Natural killer cell (primary cell): ENCODE measurements at regions of chr5 and their contacts with region 1.

Region 1: GRCh38 chr5:43389679-43390329 is 22.4 kb downstream of the CCL28 start:
- DNase-seq: peak; percentile 20 to 78
- ATAC-seq: peak; percentile 80 to 88 (median 83)
- H3K4me3 ChIP-seq: no peak overlapping the region
- H3K4me3 Mint-ChIP-seq: no peak overlapping the region
- H3K27ac ChIP-seq: no peak overlapping the region
- H3K27ac Mint-ChIP-seq: peak overlapping the region in 1 of 2 donors; percentile 59
- H3K4me1 ChIP-seq: no peaks in the 10 kb centered on the region
- H3K4me1 Mint-ChIP-seq: peaks cover 9 to 15% of the 10 kb centered on the region in 2 donors
- H3K27me3 ChIP-seq: no peaks in the 10 kb centered on the region
- H3K27me3 Mint-ChIP-seq: no peaks in the 10 kb centered on the region
- CTCF ChIP-seq: peak; percentile 85

Region 2: DNA sequence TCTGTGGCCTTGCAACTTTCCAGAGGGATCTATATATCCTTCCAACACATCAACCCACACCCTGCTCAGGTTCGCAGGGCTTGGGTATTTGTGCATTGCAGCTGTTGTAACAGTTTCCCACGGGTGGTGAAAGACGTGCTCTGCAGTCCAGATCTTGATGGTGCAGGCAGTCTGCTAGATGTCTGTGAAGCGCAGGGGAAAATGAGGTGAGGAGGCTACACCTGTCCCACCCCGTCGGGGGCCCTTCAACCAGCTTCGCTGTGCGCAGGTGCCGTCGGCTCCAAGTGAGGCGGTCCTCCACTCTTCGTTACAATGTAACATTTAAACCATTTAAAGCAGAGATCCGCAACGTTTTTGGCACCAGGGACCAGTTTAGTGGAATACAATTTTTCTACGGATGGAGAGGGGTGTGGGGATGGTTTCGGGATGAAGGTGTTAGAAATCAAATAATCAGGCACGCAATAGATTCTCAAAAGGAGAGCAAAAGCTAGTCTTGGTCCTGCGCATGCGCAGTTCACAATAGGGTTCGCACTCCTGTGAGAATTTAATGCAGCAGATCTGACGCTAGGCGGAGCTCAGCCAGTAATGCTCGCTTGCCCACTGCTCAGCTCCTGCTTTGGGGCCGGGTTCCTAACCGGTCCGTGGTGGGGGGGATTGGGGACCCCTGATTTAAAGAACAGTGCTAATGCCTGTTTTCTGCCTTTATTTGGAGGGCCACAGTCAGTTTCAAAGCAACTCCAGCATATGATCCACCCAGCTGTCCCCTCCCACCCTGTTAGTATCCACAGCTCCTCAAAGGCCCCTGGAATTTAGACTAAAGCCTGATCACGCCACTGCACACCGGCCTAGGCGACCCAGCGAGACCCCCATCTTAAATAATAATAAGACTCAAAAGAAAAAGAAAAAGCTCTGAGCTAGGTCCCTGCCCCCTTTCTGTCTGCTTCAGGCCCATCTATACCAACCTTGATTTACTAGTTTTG is 481.0 kb before region 1 on chr5:
- intact Hi-C with region 1: loop called (anchors 5 kb)
- DNase-seq: peak; percentile 83 to 98
- ATAC-seq: peak; percentile 84 to 95 (median 93)
- H3K4me3 ChIP-seq: peak overlapping the region; percentile 67
- H3K4me3 Mint-ChIP-seq: peak overlapping the region; percentile 96
- H3K27ac ChIP-seq: peak overlapping the region; percentile 41
- H3K27ac Mint-ChIP-seq: peak overlapping the region; percentile 86 to 90
- H3K4me1 ChIP-seq: peaks cover 8% of the 10 kb centered on the region
- H3K4me1 Mint-ChIP-seq: peaks cover 8 to 14% of the 10 kb centered on the region in 2 donors
- H3K27me3 ChIP-seq: no peaks in the 10 kb centered on the region
- H3K27me3 Mint-ChIP-seq: peaks cover 15 to 26% of the 10 kb centered on the region in 2 donors
- CTCF ChIP-seq: peak; percentile 81

Region 3: GRCh38 chr5:43231977-43232376 is 157.8 kb before region 1 on chr5:
- intact Hi-C with region 1: loop called (anchors 5 kb)
- DNase-seq: peak in 1 of 2 donors; percentile 14
- ATAC-seq: peak in 1 of 3 donors; percentile 53
- H3K4me3 ChIP-seq: no peak overlapping the region
- H3K4me3 Mint-ChIP-seq: no peak overlapping the region
- H3K27ac ChIP-seq: no peak overlapping the region
- H3K27ac Mint-ChIP-seq: no peak overlapping the region
- H3K4me1 ChIP-seq: no peaks in the 10 kb centered on the region
- H3K4me1 Mint-ChIP-seq: no peaks in the 10 kb centered on the region
- H3K27me3 ChIP-seq: no peaks in the 10 kb centered on the region
- H3K27me3 Mint-ChIP-seq: peaks cover 0 to 3% of the 10 kb centered on the region in 2 donors
- CTCF ChIP-seq: peak; percentile 22

Region 4: DNA sequence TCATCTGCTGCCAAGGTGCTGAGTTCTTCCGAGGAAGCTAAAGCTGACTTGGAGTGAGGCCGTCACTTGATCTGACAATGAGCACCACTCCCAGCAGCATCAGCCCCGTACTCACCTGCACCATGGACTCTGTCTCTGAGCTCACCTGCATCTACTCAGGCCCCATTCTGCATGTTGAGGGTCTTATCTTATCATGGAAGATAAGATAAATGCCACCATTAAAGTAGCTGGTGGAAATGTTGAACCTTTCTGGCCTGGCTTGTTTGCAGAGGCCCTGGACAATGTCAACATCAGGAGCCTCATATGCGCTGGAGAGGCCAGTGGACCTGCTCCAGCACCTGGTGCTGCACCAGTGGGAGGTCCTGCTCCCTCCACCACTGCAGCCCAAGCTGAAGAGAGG is 41.6 kb before region 1 on chr5:
- intact Hi-C with region 1: no loop called
- DNase-seq: no peak
- ATAC-seq: no peak
- H3K4me3 ChIP-seq: no peak overlapping the region
- H3K4me3 Mint-ChIP-seq: no peak overlapping the region
- H3K27ac ChIP-seq: no peak overlapping the region
- H3K27ac Mint-ChIP-seq: no peak overlapping the region
- H3K4me1 ChIP-seq: no peaks in the 10 kb centered on the region
- H3K4me1 Mint-ChIP-seq: no peaks in the 10 kb centered on the region
- H3K27me3 ChIP-seq: no peaks in the 10 kb centered on the region
- H3K27me3 Mint-ChIP-seq: peaks cover 9 to 23% of the 10 kb centered on the region in 2 donors
- CTCF ChIP-seq: no peak

Region 5: DNA sequence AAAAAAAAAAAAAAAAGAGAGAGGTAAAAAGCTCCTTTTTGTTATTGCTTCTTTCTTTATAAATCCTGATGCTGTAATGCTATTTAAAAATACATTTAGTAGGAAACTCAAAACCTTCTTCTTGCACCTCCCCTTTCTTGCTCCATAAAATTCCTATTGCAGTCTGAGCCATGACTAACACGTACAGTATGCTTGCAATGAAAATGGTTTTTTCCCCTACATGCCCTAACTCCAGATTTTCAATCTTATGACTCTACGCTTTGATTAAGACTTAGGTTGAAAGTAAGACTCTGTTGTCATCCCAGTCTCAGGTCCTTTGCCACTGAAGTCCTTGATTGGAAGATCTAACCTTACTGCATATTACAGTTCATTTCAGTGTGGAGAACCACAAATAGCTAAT is 975.5 kb after region 1 on chr5:
- intact Hi-C with region 1: no loop called
- DNase-seq: no peak
- ATAC-seq: no peak
- H3K4me3 ChIP-seq: no peak overlapping the region
- H3K4me3 Mint-ChIP-seq: no peak overlapping the region
- H3K27ac ChIP-seq: no peak overlapping the region
- H3K27ac Mint-ChIP-seq: no peak overlapping the region
- H3K4me1 ChIP-seq: no peaks in the 10 kb centered on the region
- H3K4me1 Mint-ChIP-seq: no peaks in the 10 kb centered on the region
- H3K27me3 ChIP-seq: no peaks in the 10 kb centered on the region
- H3K27me3 Mint-ChIP-seq: no peaks in the 10 kb centered on the region
- CTCF ChIP-seq: no peak